Colonic mucosa (tissue), 4 donors: ENCODE measurements at regions of chr2 and their contacts with region 1.

Region 1: DNA sequence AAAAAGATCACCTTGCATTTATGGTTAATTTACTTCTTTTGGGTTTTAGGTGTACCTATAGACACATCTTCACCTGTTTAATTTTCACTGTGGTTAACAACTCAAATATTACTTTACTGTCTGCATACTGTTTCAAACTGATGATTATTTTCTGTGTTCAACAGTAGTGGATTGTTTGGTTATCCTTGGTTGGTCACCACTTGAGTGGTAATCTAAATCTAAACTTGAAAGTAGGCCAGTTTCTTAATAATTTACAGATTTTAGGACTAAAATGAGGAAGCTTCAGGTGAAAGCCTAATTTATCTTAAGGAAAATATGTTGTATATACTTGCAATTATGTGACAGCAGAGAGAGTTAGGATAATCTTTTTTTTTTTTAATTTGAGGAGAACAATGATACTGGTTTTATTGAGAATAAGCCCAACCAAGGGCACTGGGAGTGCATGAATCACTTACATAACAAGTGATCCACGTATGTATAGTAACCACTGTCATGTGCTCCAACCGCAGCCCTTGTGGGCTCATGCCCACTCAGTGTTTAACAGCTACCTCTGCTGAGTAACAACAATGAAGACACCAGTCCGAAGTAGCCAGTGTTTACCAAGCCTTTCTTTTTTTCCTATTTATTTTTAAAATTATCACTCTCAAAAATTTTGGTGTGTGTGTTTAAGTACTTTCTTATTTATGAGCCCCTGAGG is 31.0 kb upstream of the WDSUB1 start:
- DNase-seq: no peak
- H3K4me3 ChIP-seq: no peak overlapping the region
- H3K27ac ChIP-seq: no peak overlapping the region
- H3K4me1 ChIP-seq: no peaks in the 10 kb centered on the region
- H3K27me3 ChIP-seq: no peaks in the 10 kb centered on the region
- CTCF ChIP-seq: no peak

Region 2: GRCh38 chr2:158893026-158893425 is 424.5 kb before region 1 on chr2:
- intact Hi-C with region 1: no loop called
- DNase-seq: no peak
- H3K4me3 ChIP-seq: no peak overlapping the region
- H3K27ac ChIP-seq: no peak overlapping the region
- H3K4me1 ChIP-seq: no peaks in the 10 kb centered on the region
- H3K27me3 ChIP-seq: no peaks in the 10 kb centered on the region
- CTCF ChIP-seq: no peak

Region 3: DNA sequence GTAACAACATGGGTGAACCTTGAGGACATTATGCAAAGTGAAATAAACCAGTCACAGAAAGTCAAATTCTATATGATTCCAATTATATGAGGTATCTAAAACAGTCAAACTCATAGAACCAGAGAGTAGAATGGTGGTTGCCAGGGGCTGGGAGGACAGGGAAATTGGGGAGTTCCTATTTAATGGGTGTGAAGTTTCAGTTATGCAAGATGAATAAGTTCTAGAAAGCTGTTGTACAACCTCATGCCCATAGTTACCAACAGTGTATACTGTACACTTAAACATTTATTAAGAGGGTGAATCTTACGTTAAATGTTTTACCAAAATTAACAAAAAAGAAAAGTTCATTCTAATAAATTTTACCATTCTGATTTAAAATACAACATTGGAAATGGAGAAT is 61.6 kb after region 1 on chr2:
- intact Hi-C with region 1: loop called (anchors 10 kb)
- DNase-seq: no peak
- H3K4me3 ChIP-seq: no peak overlapping the region
- H3K27ac ChIP-seq: no peak overlapping the region
- H3K4me1 ChIP-seq: no peaks in the 10 kb centered on the region
- H3K27me3 ChIP-seq: no peaks in the 10 kb centered on the region
- CTCF ChIP-seq: no peak